ENCODE measurements at regions of chr9 and their contacts with region 1.

Region 1: GRCh38 chr9:75974016-75974766 is 83.7 kb downstream of the PCSK5 start:
- DNase-seq: no peak
- ATAC-seq: no peak
- H3K4me3 ChIP-seq: no peak overlapping the region
- H3K27ac ChIP-seq: no peak overlapping the region
- H3K4me1 ChIP-seq: peaks cover 0 to 13% (median 0%) of the 10 kb centered on the region in 9 donors
- H3K27me3 ChIP-seq: no peaks in the 10 kb centered on the region
- CTCF ChIP-seq: no peak

Region 2: DNA sequence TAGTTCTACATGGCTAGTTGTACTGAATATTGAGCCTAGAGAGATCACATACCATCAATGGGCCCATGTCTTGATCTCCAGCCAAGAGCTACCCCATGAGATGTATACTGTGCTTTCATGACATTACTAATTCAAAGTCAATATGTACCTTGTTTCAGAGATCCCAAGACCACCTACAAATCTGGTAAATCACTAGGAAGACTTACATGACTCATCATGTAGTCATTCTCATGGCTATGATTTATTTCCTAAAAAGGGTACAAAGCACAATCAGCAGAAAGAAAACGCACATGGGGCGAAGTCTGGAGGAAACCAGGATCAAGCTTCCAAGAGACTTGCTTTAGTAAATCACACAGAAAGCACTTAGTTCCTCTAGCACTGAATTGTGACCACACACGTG is 19.2 kb after region 1 on chr9:
- intact Hi-C with region 1: loop called in 1 of 10 experiments (anchors 2 kb)
- DNase-seq: no peak
- ATAC-seq: no peak
- H3K4me3 ChIP-seq: no peak overlapping the region
- H3K27ac ChIP-seq: no peak overlapping the region
- H3K4me1 ChIP-seq: peaks cover 0 to 13% (median 0%) of the 10 kb centered on the region in 9 donors
- H3K27me3 ChIP-seq: no peaks in the 10 kb centered on the region
- CTCF ChIP-seq: no peak